GM13977 (cell line): ENCODE measurements at regions of chr4 and their contacts with region 1.

Region 1: DNA sequence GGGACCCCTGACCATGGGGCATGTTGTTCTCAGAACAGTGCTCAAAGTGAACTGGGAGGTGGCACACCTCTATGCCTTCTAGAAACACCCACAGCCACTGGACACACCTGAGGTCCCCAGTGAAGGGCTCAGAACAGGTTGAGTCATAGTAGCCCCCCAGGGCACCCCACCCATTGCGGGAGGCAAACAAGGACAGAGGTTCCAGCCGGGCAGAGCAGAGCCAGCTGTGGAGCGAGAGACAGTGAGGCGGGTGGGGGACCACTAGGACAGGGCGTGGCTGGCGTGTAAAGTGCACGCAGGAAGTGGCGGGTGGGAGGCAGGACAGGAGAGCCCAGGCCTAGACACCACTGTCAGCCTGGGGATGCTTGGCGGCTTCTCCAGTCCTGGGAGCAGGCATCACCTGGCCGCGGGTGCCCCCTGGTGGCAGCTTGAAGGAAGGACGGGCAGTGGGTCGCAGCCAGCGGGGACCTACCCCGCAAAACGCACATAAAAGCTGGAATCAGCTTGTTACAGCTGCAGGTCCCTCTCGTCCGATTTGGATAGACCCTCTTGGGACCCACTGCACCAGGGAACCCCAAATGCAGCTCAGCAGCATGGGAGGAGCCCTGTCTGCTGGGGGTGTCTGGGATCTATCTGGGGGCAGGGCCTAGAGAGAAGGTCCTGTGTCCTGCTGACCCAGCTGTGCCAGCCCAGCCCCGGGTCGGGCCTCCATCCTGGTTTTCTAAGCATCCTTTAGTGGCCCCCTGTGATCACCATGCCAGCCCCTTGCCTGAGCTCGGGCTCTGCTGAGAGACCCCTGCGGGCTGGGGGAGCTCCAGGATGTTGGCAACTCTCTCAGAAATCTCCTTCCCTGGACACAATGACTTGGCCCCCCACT is 57.6 kb downstream of the WFS1 start:
- DNase-seq: peak; percentile 89
- CTCF ChIP-seq: peak; percentile 96

Region 2: DNA sequence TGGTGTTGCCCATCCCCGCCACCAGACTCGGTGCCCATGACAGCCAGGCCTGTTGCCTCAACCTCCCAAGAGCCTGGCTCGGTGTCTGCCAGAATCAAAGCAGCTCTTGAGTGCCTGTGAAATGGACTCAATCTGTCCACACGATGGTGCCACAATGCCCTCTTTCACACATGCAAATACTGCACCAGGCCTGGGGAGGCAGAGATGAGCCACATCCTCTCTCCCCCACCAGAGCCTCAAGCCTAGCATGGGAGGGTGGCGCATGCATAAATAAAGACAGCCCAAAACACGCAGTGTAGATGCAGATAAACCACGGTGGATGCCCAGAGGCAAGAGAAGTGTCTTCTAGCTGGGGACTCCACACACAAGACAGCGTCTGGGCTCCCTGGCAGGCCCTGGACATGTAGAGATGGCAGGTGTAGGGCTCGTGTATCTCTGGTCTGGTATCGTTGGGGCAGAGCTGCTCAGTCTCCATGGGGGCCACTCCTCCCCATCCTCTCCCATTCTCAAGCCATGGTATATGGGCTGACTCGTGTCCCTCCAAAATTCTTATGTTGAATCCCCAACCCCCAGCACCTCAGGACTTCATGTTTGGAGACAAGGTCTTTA is 192.6 kb before region 1 on chr4:
- in situ Hi-C with region 1: no loop called
- DNase-seq: peak; percentile 71
- CTCF ChIP-seq: peak; percentile 56

Region 3: GRCh38 chr4:6250235-6250983 is 76.9 kb before region 1 on chr4:
- in situ Hi-C with region 1: loop called (anchors 5 kb)
- DNase-seq: peak; percentile 85
- CTCF ChIP-seq: peak; percentile 76